ENCODE measurements at regions of chr5 and their contacts with region 1.

Region 1: DNA sequence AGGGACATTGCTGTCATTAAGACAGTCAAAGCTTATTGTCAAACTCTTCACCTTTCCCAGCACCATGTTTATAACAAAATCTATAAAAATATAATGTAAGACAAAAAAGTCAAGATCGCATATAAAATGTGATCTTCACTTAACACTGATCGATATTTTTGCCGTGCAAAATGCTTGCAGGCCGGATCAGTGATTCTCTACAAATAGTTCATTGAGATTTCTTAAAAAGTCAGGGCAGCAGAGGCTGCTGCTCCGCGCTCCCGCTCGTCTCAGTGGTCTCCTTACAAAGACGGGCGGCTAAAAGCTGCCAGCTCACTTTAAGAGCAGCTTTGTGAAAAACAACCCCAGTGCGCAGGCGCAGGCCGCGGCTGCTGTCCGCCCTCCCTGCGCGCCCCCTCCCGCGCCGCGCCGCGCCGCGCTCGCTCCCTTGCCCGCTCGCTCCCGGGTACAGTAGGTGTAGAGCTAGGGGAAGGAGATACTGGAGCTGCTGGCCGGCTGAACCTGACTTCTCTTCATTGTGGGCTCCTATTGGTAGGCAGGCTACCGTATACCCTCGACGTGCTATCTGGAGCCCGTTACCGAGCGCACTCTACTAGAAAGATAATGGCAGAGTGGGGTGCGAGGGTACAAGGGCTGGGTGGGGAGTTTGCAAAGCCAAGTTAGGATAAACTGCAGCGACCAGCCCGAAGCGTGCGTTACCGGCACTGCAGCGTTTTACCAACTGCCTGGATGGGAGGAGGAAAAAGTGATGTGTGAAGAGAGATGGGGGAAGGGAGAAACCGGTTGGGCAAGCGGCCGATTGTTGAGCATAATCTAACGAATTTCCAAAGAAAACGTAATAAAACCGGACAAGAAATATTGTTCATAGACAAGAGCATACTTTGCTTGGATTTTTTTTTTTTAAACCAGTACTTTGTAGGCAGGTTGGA is at the start of gene ARRDC3:
- DNase-seq: peak; percentile 97
- ATAC-seq: peak; percentile 49
- H3K4me3 ChIP-seq: peak within 1 kb of the TSS; percentile 76 to 98 (median 98)
- H3K4me3 Mint-ChIP-seq: peak within 1 kb of the TSS; percentile 88
- H3K27ac ChIP-seq: peak within 1 kb of the TSS; percentile 99 to 100
- H3K27ac Mint-ChIP-seq: peak within 1 kb of the TSS; percentile 99
- H3K4me1 ChIP-seq: peaks cover 15 to 17% of the 10 kb centered on the region in 2 donors
- H3K4me1 Mint-ChIP-seq: peaks cover 25% of the 10 kb centered on the region
- H3K27me3 ChIP-seq: no peaks in the 10 kb centered on the region
- H3K27me3 Mint-ChIP-seq: no peaks in the 10 kb centered on the region
- CTCF ChIP-seq: no peak
- total RNA-seq, gene ARRDC3: 84.9 and 95.4 TPM in 2 replicates

Region 2: GRCh38 chr5:90866333-90866732 is 517.0 kb before region 1 on chr5:
- CTCF ChIA-PET with region 1: interaction called, 48 read pairs
- POLR2A ChIA-PET with region 1: no interaction called
- intact Hi-C with region 1: no loop called
- DNase-seq: peak; percentile 47
- ATAC-seq: peak; percentile 31
- H3K4me3 ChIP-seq: no peak overlapping the region
- H3K4me3 Mint-ChIP-seq: no peak overlapping the region
- H3K27ac ChIP-seq: no peak overlapping the region
- H3K27ac Mint-ChIP-seq: no peak overlapping the region
- H3K4me1 ChIP-seq: no peaks in the 10 kb centered on the region
- H3K4me1 Mint-ChIP-seq: peaks cover 2% of the 10 kb centered on the region
- H3K27me3 ChIP-seq: peaks cover 0 to 3% (median 0%) of the 10 kb centered on the region in 4 experiments
- H3K27me3 Mint-ChIP-seq: peaks cover 11% of the 10 kb centered on the region
- CTCF ChIP-seq: peak; percentile 73

Region 3: GRCh38 chr5:91106842-91107511 is 276.3 kb before region 1 on chr5:
- CTCF ChIA-PET with region 1: interaction called, 49 read pairs
- POLR2A ChIA-PET with region 1: interaction called, 3 read pairs
- intact Hi-C with region 1: no loop called
- DNase-seq: no peak
- ATAC-seq: no peak
- H3K4me3 ChIP-seq: no peak overlapping the region
- H3K4me3 Mint-ChIP-seq: no peak overlapping the region
- H3K27ac ChIP-seq: no peak overlapping the region
- H3K27ac Mint-ChIP-seq: no peak overlapping the region
- H3K4me1 ChIP-seq: no peaks in the 10 kb centered on the region
- H3K4me1 Mint-ChIP-seq: no peaks in the 10 kb centered on the region
- H3K27me3 ChIP-seq: peaks cover 0 to 3% (median 0%) of the 10 kb centered on the region in 4 experiments
- H3K27me3 Mint-ChIP-seq: peaks cover 3% of the 10 kb centered on the region
- CTCF ChIP-seq: no peak

Region 4: DNA sequence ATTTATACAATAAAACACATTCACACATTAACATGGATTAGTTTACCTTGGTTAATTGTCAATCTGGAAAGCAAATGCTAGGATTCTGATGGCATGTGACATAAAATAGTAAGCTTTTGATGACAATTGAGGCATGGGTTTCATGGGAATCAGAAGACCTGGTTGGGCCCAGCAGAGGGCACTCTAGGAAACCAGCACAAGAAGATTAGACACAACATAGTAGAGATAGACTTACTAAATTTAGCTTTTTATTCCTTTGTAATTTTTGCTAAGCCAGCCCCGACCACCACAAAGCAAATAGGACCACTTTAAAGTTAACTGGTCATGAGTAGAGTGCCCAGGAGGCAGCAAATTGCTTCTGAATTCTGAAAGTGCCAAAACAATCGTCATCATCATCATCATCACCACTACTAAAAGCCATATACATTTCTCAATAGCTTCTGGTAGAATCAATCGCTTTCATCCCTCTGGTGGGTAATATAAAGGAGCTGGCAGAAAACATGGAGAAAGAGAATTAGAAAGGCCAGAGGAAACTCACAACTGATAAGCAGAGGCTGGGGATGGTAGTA is 163.4 kb before region 1 on chr5:
- CTCF ChIA-PET with region 1: interaction called, 195 read pairs
- POLR2A ChIA-PET with region 1: interaction called, 6 read pairs
- intact Hi-C with region 1: no loop called
- DNase-seq: peak; percentile 19
- ATAC-seq: no peak
- H3K4me3 ChIP-seq: no peak overlapping the region
- H3K4me3 Mint-ChIP-seq: no peak overlapping the region
- H3K27ac ChIP-seq: no peak overlapping the region
- H3K27ac Mint-ChIP-seq: no peak overlapping the region
- H3K4me1 ChIP-seq: no peaks in the 10 kb centered on the region
- H3K4me1 Mint-ChIP-seq: no peaks in the 10 kb centered on the region
- H3K27me3 ChIP-seq: no peaks in the 10 kb centered on the region
- H3K27me3 Mint-ChIP-seq: peaks cover 7% of the 10 kb centered on the region
- CTCF ChIP-seq: no peak

Region 5: GRCh38 chr5:91280362-91281269 is 102.7 kb before region 1 on chr5:
- CTCF ChIA-PET with region 1: interaction called, 34 read pairs
- POLR2A ChIA-PET with region 1: interaction called, 20 read pairs
- intact Hi-C with region 1: loop called (anchors 1 kb)
- DNase-seq: peak; percentile 87
- ATAC-seq: peak; percentile 83
- H3K4me3 ChIP-seq: peak overlapping the region; percentile 52 to 95 (median 68)
- H3K4me3 Mint-ChIP-seq: peak overlapping the region; percentile 90
- H3K27ac ChIP-seq: no peak overlapping the region
- H3K27ac Mint-ChIP-seq: peak overlapping the region; percentile 84
- H3K4me1 ChIP-seq: peaks cover 11 to 20% of the 10 kb centered on the region in 2 donors
- H3K4me1 Mint-ChIP-seq: peaks cover 21% of the 10 kb centered on the region
- H3K27me3 ChIP-seq: peaks cover 0 to 6% (median 3%) of the 10 kb centered on the region in 4 experiments
- H3K27me3 Mint-ChIP-seq: peaks cover 7% of the 10 kb centered on the region
- CTCF ChIP-seq: no peak

Measured in B cell (primary cell).